Activated T-helper 1 cell treated with anti-CD3 and anti-CD28 coated beads, Interleukin-12 subunit alpha, Interleukin-12 subunit beta, Interleukin-2, Interleukin-4 antibody, amounts not matched to agents 30 ng/mL and 10 ng/mL and 1 ng/mL, durations not matched to agents 14 hours and 24 hours and 36 hours (primary cell): ENCODE measurements at regions of chr12 and their contacts with region 1.

Region 1: DNA sequence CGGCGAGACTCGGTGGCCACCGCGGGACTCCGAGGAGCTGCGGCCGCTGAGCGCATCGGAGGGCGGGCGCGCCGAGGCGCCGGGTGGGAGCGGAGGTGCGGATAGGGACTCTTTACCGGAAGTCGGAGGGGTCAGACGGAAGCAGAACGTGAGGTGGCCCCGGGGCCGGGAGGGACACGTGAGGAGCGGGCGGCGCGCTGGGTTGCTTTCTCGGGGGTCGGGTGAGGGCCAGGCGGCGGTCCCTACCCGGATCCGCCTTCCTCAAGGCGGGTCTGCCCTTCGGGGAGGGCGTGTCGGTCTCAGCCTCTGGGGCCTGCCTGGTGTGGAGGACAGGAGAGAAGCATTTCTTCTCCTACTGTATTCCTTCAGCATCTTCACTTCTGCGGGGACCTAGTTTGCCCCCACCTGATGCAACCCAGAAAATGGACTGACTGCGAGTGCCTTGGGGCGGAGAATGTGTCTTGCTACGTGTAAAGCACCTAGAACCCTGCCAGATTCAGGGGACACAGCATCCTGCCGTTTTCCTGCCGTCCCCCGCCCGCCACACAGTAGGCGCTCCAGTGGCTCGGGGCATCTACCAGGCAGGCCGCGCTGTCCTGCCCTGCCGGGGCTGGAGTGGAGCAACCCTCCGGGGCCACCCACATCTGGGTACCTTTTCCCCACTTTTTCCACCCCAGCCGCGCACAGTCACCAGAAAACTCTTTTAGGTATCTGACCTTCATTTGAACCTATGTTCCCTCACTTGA is 517 bp upstream of the ATXN2 start:
- DNase-seq: peak; percentile 80
- H3K4me3 Mint-ChIP-seq: peak overlapping the region; percentile 79
- H3K27ac Mint-ChIP-seq: peak overlapping the region; percentile 68
- H3K4me1 Mint-ChIP-seq: peaks cover 29% of the 10 kb centered on the region
- H3K27me3 Mint-ChIP-seq: no peaks in the 10 kb centered on the region

Region 2: GRCh38 chr12:111368788-111369495 is 230.7 kb before region 1 on chr12 and contains the start of gene PHETA1:
- intact Hi-C with region 1: loop called (anchors 1 kb)
- DNase-seq: peak; percentile 79
- H3K4me3 Mint-ChIP-seq: peak within 1 kb of the TSS; percentile 80
- H3K27ac Mint-ChIP-seq: no peak within 1 kb of the TSS
- H3K4me1 Mint-ChIP-seq: peaks cover 17% of the 10 kb centered on the region
- H3K27me3 Mint-ChIP-seq: peaks cover 18% of the 10 kb centered on the region
- total RNA-seq, gene PHETA1: 2.7 and 4.2 TPM in 2 replicates

Region 3: DNA sequence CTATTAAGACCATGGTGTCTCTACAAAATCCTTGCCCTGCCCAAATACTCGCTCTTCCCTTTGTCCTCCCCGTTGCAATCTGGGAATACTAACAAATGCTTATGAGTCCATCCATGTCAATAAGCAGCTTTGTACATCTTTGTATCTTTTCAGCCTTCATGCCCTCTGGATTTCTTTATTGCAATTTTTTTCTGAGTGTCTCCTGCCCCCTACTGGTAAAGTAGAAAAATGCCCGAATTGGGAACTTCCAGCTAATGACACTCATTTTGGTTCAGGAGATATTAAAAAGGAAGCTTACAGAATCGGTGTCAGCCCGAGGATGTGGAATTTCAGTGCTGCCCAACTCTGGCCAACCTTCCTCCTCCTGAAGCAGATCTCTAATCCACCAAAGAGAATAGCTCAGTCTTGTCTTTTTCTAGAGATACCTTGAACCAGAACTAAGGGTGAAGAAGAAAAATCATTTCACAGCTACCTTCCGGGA is 147.9 kb before region 1 on chr12:
- intact Hi-C with region 1: loop called (anchors 5 kb)
- DNase-seq: peak; percentile 21
- H3K4me3 Mint-ChIP-seq: peak overlapping the region; percentile 15
- H3K27ac Mint-ChIP-seq: no peak overlapping the region
- H3K4me1 Mint-ChIP-seq: peaks cover 50% of the 10 kb centered on the region
- H3K27me3 Mint-ChIP-seq: no peaks in the 10 kb centered on the region

Region 4: DNA sequence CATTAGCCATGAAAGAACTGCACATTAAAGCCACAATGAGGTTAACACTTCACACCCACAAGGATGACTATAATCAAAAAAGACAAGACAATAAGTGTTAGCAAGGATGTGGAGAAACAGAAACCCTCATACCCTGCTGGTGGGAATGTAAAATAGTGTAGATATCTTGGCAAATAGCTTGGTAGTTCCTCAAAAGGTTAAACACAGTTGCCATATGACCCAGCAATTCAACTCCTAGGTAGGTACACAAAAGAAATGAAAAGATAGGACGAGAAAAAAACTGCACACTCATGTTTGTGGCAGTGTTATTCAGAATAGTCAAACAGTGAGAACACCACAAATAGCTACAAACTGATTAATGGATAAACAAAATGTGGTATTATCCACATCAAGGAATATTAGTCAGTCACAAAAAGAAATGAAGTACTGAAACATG is 94.0 kb before region 1 on chr12:
- intact Hi-C with region 1: no loop called
- DNase-seq: no peak
- H3K4me3 Mint-ChIP-seq: no peak overlapping the region
- H3K27ac Mint-ChIP-seq: peak overlapping the region; percentile 51
- H3K4me1 Mint-ChIP-seq: peaks cover 16% of the 10 kb centered on the region
- H3K27me3 Mint-ChIP-seq: no peaks in the 10 kb centered on the region

Region 5: DNA sequence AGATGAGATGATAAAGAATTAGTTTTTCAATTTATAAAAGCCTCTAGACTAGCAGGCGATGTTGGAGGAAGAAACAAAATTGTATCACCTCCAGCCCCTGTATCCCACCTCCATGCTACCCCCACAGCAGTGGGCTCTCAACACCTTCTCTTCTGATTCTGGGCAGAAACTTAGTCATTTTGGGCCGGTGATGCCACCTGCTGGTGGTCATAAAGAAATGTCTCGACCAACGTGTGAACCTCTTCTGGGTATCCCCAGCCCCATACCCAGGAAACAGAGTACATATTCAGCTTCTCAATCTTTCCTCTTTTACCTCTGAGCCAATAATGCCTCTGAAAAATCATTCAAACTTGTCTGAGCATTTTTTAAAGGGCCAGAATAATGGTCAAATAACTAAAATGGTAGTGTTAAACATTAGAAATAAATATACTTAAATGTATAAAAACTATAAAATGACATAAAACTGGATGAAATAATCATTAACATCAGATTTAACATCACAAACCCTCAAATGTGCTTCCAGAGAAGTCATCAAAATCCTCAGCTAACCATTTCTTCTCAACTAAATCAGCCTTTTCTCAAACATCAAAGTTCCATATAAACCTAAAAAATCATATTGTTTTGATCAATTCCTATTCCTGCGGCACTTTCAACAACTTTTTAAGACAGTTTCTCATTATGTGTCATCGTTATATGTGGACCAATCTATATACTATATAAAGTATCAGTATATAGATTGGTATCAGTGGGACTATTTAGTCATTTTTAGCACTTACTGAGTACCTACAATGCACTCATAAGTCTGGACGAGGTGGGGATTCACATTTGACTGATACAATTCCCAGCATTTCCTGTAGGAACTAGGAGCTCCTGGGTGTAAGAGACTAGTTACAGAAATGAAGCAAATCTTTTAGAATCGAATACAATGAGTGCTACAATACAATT is 69.9 kb before region 1 on chr12:
- intact Hi-C with region 1: loop called (anchors 5 kb)
- DNase-seq: peak; percentile 47
- H3K4me3 Mint-ChIP-seq: no peak overlapping the region
- H3K27ac Mint-ChIP-seq: peak overlapping the region; percentile 44
- H3K4me1 Mint-ChIP-seq: peaks cover 14% of the 10 kb centered on the region
- H3K27me3 Mint-ChIP-seq: no peaks in the 10 kb centered on the region

Region 6: DNA sequence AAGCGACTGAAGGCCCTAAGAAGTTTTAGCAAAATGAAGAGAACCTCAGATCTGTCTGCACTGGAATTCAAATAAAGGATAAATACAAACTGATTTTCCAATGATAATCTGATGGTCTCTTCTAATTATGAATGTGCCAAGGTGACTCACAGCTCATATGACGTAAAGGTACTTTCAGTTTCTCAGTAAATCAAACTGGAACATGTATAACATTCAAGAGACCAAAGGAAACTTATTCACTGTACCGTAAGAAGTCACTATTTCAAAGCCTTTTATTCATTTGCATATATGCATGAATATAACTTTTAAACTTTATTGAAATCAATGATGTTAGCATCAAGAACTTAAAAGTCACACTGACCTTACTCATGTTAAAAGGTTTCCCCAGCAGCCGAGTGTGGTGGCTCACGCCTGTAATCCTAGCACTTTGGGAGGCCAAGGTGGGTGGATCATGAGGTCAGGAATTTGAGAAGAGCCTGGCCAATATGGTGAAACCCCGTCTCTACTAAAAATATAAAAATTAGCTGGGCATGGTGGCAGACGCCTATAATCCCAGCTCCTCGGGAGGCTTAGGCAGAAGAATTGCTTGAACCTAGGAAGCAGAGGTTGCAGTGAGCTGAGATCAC is 52.8 kb before region 1 on chr12:
- intact Hi-C with region 1: loop called (anchors 1 kb)
- DNase-seq: no peak
- H3K4me3 Mint-ChIP-seq: peak overlapping the region; percentile 11
- H3K27ac Mint-ChIP-seq: peak overlapping the region; percentile 95
- H3K4me1 Mint-ChIP-seq: peaks cover 29% of the 10 kb centered on the region
- H3K27me3 Mint-ChIP-seq: no peaks in the 10 kb centered on the region

Region 7: GRCh38 chr12:111841750-111842555 is 242.3 kb after region 1 on chr12 and contains the start of gene MAPKAPK5:
- intact Hi-C with region 1: loop called (anchors 2 kb)
- DNase-seq: peak; percentile 95
- H3K4me3 Mint-ChIP-seq: peak within 1 kb of the TSS; percentile 98
- H3K27ac Mint-ChIP-seq: peak within 1 kb of the TSS; percentile 99
- H3K4me1 Mint-ChIP-seq: peaks cover 49% of the 10 kb centered on the region
- H3K27me3 Mint-ChIP-seq: no peaks in the 10 kb centered on the region
- total RNA-seq, gene MAPKAPK5: 82.1 and 86.5 TPM in 2 replicates

Region 8: GRCh38 chr12:112125250-112125999 is 525.8 kb after region 1 on chr12 and contains the start of gene TRAFD1:
- intact Hi-C with region 1: loop called (anchors 5 kb)
- DNase-seq: peak; percentile 98
- H3K4me3 Mint-ChIP-seq: peak within 1 kb of the TSS; percentile 82
- H3K27ac Mint-ChIP-seq: peak within 1 kb of the TSS; percentile 84
- H3K4me1 Mint-ChIP-seq: peaks cover 41% of the 10 kb centered on the region
- H3K27me3 Mint-ChIP-seq: peaks cover 10% of the 10 kb centered on the region
- total RNA-seq, gene TRAFD1: 46.5 and 46.7 TPM in 2 replicates